ENCODE measurements at regions of chr4 and their contacts with region 1.

Region 1: GRCh38 chr4:27010334-27010940 is 149.8 kb downstream of the STIM2 start:
- DNase-seq: peak; percentile 16
- ATAC-seq: peak; percentile 77
- H3K4me3 ChIP-seq: no peak overlapping the region
- H3K27ac ChIP-seq: no peak overlapping the region
- H3K4me1 ChIP-seq: no peaks in the 10 kb centered on the region
- H3K27me3 ChIP-seq: no peaks in the 10 kb centered on the region
- CTCF ChIP-seq: peak; percentile 79 to 86 (median 81)
- EP300 ChIP-seq: no peak
- POLR2A ChIP-seq: no peak
- RAD21 ChIP-seq: peak; percentile 99

Region 2: DNA sequence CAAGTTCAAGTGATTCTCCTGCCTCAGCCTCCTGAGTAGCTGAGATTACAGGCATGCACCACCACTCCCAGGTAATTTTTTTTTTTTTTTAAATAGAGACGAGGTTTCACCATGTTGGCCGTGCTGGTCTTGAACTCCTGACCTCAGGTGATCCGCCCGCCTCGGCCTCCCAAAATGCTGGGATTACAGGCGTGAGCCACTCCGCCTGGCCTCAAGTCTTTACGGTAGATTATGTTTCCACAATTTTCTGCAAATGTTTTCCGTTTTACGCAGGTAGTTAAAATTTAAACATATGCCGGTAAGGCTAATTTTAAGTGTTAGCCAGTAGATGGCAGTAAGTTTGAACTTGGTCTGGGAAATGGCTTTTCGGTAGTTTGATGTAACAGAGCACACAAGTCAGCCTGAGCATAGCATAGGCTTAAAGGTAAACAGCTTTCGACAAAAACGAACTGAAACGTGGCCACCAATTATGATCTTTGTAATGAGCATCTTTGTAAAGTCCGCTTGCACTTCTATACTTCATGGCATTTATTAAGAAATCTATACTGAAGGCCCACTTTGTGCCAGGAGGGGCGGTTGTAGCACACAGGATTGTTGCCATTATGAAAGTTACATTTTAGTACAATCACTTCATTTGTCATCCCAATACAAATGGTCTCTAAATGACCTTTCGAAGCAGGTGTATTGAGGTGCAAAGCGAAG is 551.2 kb before region 1 on chr4:
- CTCF ChIA-PET with region 1: interaction called, 78 read pairs
- POLR2A ChIA-PET with region 1: no interaction called
- RAD21 ChIA-PET with region 1: interaction called, 6 read pairs
- SMC1A ChIA-PET with region 1: interaction called, 7 read pairs
- in situ Hi-C with region 1: loop called (anchors 5 kb)
- intact Hi-C with region 1: loop called (anchors 2 kb)
- DNase-seq: peak; percentile 26
- ATAC-seq: peak; percentile 90
- H3K4me3 ChIP-seq: no peak overlapping the region
- H3K27ac ChIP-seq: no peak overlapping the region
- H3K4me1 ChIP-seq: no peaks in the 10 kb centered on the region; the same call in 1 of the 2 replicates
- H3K27me3 ChIP-seq: no peaks in the 10 kb centered on the region
- CTCF ChIP-seq: peak; percentile 53 to 65 (median 59); a peak in 5 of 6 replicates
- EP300 ChIP-seq: no peak
- POLR2A ChIP-seq: no peak
- RAD21 ChIP-seq: peak; percentile 76

Region 3: DNA sequence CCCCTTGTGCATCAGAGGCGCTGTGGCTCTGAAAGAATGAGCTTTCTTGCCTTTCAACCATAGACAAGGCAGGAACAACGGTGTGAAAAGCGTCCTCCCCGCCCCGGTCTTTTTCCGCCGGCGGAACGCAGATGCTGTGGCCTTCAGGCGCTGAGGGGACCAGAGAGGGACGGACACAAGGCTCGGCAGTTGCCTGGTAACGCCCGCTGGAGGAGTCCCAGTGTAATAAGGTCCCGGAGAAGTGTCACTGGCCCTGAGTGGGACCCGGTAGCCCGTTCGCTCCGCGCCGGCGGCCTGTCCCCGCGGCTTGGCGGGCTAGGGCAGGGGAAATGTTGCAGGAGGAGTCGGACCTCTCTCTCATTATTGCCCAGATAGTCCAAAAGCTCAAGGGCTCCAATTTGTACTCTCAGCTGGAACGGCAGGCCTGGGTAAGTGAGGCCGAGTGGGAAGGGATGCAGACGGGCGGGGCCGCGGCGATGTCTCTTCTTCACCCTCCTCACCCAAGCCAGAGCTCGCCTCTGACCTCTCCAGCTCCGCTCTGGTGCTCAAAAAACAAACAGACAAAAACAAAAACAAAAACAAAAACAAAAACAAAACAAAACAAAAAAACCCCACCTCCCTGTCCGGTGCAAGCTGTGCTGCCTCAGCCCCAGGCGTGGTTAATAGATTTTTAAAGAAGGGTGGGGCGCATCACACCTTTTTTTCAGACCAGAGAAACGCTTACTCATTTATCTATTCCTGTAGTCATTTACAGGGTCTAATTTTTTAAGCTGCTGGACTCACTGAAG is 426.4 kb before region 1 on chr4 and contains the start of gene TBC1D19:
- CTCF ChIA-PET with region 1: no interaction called
- POLR2A ChIA-PET with region 1: no interaction called
- RAD21 ChIA-PET with region 1: no interaction called
- SMC1A ChIA-PET with region 1: interaction called, 3 read pairs
- in situ Hi-C with region 1: loop called (anchors 10 kb)
- intact Hi-C with region 1: loop called (anchors 2 kb)
- DNase-seq: peak; percentile 56
- ATAC-seq: peak; percentile 100
- H3K4me3 ChIP-seq: peak within 1 kb of the TSS; percentile 74
- H3K27ac ChIP-seq: peak within 1 kb of the TSS; percentile 44
- H3K4me1 ChIP-seq: peaks cover 4% of the 10 kb centered on the region; the same call in 1 of the 2 replicates
- H3K27me3 ChIP-seq: no peaks in the 10 kb centered on the region; a peak in 1 of 4 replicates
- CTCF ChIP-seq: 0 out of 6 replicates have a peak, but pooled peaks of 1 of the 3 experiments have one; percentile 2
- EP300 ChIP-seq: no peak
- POLR2A ChIP-seq: peak; percentile 70
- RAD21 ChIP-seq: peak; percentile 29
- polyA plus RNA-seq, gene TBC1D19: 0.29 to 0.53 TPM

Region 4: GRCh38 chr4:26719954-26720552 is 290.4 kb before region 1 on chr4:
- CTCF ChIA-PET with region 1: interaction called, 6 read pairs
- POLR2A ChIA-PET with region 1: no interaction called
- RAD21 ChIA-PET with region 1: interaction called, 5 read pairs
- SMC1A ChIA-PET with region 1: interaction called, 33 read pairs
- in situ Hi-C with region 1: no loop called
- intact Hi-C with region 1: no loop called
- DNase-seq: no peak
- ATAC-seq: no peak
- H3K4me3 ChIP-seq: no peak overlapping the region
- H3K27ac ChIP-seq: no peak overlapping the region
- H3K4me1 ChIP-seq: no peaks in the 10 kb centered on the region
- H3K27me3 ChIP-seq: no peaks in the 10 kb centered on the region
- CTCF ChIP-seq: peak in 2 of 3 experiments; percentile 34 to 40; a peak in 3 of 6 replicates
- EP300 ChIP-seq: no peak
- POLR2A ChIP-seq: no peak
- RAD21 ChIP-seq: peak; percentile 78

Region 5: GRCh38 chr4:26787461-26788340 is 222.7 kb before region 1 on chr4:
- CTCF ChIA-PET with region 1: interaction called, 19 read pairs
- POLR2A ChIA-PET with region 1: no interaction called
- RAD21 ChIA-PET with region 1: interaction called, 7 read pairs
- SMC1A ChIA-PET with region 1: interaction called, 6 read pairs
- in situ Hi-C with region 1: no loop called
- intact Hi-C with region 1: loop called (anchors 2 kb)
- DNase-seq: no peak
- ATAC-seq: peak; percentile 57
- H3K4me3 ChIP-seq: no peak overlapping the region
- H3K27ac ChIP-seq: no peak overlapping the region
- H3K4me1 ChIP-seq: peaks cover 7% of the 10 kb centered on the region
- H3K27me3 ChIP-seq: no peaks in the 10 kb centered on the region
- CTCF ChIP-seq: peak; percentile 28 to 38 (median 34); a peak in 4 of 6 replicates
- EP300 ChIP-seq: no peak
- POLR2A ChIP-seq: no peak
- RAD21 ChIP-seq: peak; percentile 70

Region 6: GRCh38 chr4:26992657-26993361 is 17.6 kb before region 1 on chr4:
- CTCF ChIA-PET with region 1: interaction called, 11 read pairs
- POLR2A ChIA-PET with region 1: no interaction called
- RAD21 ChIA-PET with region 1: interaction called, 6 read pairs
- SMC1A ChIA-PET with region 1: interaction called, 36 read pairs
- in situ Hi-C with region 1: no loop called
- intact Hi-C with region 1: no loop called
- DNase-seq: peak; percentile 72
- ATAC-seq: peak; percentile 94
- H3K4me3 ChIP-seq: peak overlapping the region; percentile 39; the same call in 1 of the 2 replicates
- H3K27ac ChIP-seq: peak overlapping the region; percentile 89
- H3K4me1 ChIP-seq: peaks cover 21% of the 10 kb centered on the region
- H3K27me3 ChIP-seq: no peaks in the 10 kb centered on the region
- CTCF ChIP-seq: no peak
- EP300 ChIP-seq: peak; percentile 78 to 84
- POLR2A ChIP-seq: no peak
- RAD21 ChIP-seq: no peak

Region 7: GRCh38 chr4:27043200-27043599 is 32.8 kb after region 1 on chr4:
- CTCF ChIA-PET with region 1: no interaction called
- POLR2A ChIA-PET with region 1: no interaction called
- RAD21 ChIA-PET with region 1: no interaction called
- SMC1A ChIA-PET with region 1: no interaction called
- in situ Hi-C with region 1: no loop called
- intact Hi-C with region 1: no loop called
- DNase-seq: no peak
- ATAC-seq: no peak
- H3K4me3 ChIP-seq: no peak overlapping the region
- H3K27ac ChIP-seq: no peak overlapping the region
- H3K4me1 ChIP-seq: no peaks in the 10 kb centered on the region
- H3K27me3 ChIP-seq: no peaks in the 10 kb centered on the region
- CTCF ChIP-seq: no peak
- EP300 ChIP-seq: no peak
- POLR2A ChIP-seq: no peak
- RAD21 ChIP-seq: no peak

Region 8: DNA sequence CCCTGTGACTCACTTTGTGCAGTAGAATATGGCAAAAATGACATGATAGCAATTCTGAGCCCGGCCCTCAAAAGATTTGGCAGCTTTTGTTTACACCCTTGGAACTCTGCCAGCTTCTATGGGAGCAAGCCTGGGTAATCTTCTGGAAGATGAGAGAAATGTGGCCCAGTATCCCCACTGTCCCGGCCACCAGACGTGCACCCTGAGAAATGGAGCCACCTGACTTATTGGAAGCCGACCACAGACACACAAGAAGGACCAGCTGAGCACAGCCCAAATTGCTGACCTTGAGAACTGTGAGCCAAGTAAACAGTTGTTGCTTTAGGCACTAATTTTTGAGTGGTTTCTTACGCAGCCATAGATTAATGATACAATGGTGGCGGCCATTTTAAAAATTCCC is 47.2 kb after region 1 on chr4:
- CTCF ChIA-PET with region 1: no interaction called
- POLR2A ChIA-PET with region 1: no interaction called
- RAD21 ChIA-PET with region 1: no interaction called
- SMC1A ChIA-PET with region 1: no interaction called
- in situ Hi-C with region 1: no loop called
- intact Hi-C with region 1: no loop called
- DNase-seq: no peak
- ATAC-seq: no peak
- H3K4me3 ChIP-seq: no peak overlapping the region
- H3K27ac ChIP-seq: no peak overlapping the region
- H3K4me1 ChIP-seq: no peaks in the 10 kb centered on the region
- H3K27me3 ChIP-seq: no peaks in the 10 kb centered on the region
- CTCF ChIP-seq: no peak
- EP300 ChIP-seq: no peak
- POLR2A ChIP-seq: no peak
- RAD21 ChIP-seq: no peak